CD8-positive, alpha-beta T cell (primary cell): ENCODE measurements at regions of chr19 and their contacts with region 1.

Region 1: DNA sequence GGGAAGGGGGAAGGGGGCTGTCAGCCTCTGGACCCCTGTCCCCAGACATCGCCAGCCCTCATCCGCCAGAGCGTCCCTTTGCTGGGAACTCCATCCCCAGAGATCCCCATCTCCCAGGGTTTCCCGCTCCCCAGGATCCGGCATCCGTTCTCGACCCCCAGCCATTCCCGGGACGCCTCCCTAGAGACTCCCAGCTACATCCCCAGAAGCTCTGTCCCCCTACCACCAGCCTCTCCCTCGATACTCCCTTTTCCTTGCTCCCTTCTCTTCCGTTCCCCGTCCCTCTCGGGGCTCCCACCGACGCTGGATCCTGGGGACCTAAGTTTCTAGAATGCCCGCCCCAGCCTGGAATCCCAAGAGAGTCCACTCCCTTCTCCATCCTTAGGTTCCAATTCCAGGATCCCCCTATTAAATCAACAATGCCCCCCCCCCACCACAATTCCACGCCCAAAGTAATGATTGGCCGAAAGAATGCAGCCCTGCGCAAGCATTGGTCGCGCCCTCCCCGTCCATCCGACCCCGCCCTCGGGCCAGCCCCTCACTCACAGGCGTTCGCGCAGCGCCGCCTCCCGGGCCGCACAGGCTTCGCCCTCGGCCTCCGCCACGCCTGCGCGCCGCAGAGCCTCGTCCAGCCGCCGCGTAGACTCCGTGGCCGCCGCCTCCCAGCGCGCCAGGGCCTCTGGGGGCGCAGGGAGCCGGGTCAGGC is 3.2 kb downstream of the CCDC194 start:
- DNase-seq: peak; percentile 75 to 94 (median 90)
- ATAC-seq: peak; percentile 99
- H3K4me3 ChIP-seq: peak overlapping the region; percentile 63 to 66
- H3K4me3 Mint-ChIP-seq: peak overlapping the region; percentile 87
- H3K27ac ChIP-seq: no peak overlapping the region
- H3K27ac Mint-ChIP-seq: no peak overlapping the region
- H3K4me1 ChIP-seq: peaks cover 22% of the 10 kb centered on the region
- H3K4me1 Mint-ChIP-seq: peaks cover 18% of the 10 kb centered on the region
- H3K27me3 ChIP-seq: no peaks in the 10 kb centered on the region
- H3K27me3 Mint-ChIP-seq: no peaks in the 10 kb centered on the region
- CTCF ChIP-seq: peak; percentile 62

Region 2: DNA sequence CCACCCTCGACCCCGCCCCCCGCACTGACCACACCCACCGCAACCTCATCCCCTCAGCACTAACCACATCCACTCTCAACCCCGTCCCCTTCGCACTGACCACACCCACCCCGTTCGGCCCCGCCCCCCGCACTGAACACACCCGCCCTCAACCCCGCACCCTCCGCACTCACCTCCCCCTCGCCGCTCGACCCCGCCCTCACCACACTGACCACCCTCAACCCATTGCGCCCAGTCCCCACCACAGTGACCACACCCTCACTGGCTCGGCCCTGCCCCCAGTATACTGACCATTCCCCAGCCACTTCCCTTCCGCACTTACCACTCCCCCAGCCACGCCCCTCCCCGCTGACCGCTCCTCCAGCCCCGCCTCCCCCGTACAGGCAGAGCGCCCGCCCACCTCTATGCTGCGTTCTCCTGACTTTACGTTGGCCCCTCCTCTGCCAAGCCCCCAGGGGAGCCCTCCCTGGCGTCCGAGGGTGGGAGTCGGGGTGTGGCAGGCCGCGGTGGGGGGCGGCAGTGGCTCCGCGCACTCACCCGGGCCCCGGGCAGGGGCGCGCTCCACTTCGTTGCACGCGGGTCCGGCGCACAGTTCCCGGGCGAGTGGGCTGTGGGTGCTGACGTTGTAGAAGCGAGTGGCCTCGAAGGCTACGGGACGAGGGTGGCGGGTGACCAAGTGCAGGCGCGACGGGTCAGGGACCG is 493.5 kb before region 1 on chr19:
- CTCF ChIA-PET with region 1: no interaction called
- POLR2A ChIA-PET with region 1: no interaction called
- intact Hi-C with region 1: no loop called
- DNase-seq: peak in 8 of 9 experiments; percentile 32 to 79 (median 62)
- ATAC-seq: peak; percentile 48
- H3K4me3 ChIP-seq: peak overlapping the region; percentile 48 to 59
- H3K4me3 Mint-ChIP-seq: peak overlapping the region; percentile 73
- H3K27ac ChIP-seq: no peak overlapping the region
- H3K27ac Mint-ChIP-seq: no peak overlapping the region
- H3K4me1 ChIP-seq: peaks cover 26% of the 10 kb centered on the region
- H3K4me1 Mint-ChIP-seq: peaks cover 13% of the 10 kb centered on the region
- H3K27me3 ChIP-seq: no peaks in the 10 kb centered on the region
- H3K27me3 Mint-ChIP-seq: peaks cover 40% of the 10 kb centered on the region
- CTCF ChIP-seq: no peak

Region 3: DNA sequence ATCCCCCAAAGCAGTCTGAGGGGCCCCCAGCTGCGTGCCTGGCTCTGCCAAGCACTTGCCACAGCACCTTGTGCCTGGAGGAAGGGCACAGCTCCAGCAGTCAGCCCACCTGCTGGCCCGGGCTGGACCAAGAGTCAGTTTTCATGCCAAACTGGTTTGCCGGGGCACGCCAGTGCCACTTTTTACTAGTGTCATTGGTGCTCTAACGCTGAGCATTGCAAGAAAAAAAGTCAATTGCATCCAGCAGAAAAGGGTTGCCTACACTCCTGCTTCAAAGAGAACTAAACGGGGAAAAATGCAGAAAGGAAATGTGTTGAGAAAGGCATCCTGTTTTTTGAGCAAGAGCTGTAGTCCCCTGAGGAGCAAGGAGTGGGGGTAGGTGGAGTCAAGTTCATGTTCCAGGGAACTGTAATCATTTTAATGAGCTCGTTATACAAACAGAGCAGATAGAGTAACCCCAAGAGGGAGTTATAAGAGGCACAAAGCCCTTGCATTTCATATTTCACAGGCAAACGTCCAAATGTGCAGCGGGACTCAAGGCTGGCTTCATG is 433.6 kb before region 1 on chr19:
- CTCF ChIA-PET with region 1: no interaction called
- POLR2A ChIA-PET with region 1: no interaction called
- intact Hi-C with region 1: no loop called
- DNase-seq: no peak
- ATAC-seq: no peak
- H3K4me3 ChIP-seq: no peak overlapping the region
- H3K4me3 Mint-ChIP-seq: no peak overlapping the region
- H3K27ac ChIP-seq: no peak overlapping the region
- H3K27ac Mint-ChIP-seq: no peak overlapping the region
- H3K4me1 ChIP-seq: no peaks in the 10 kb centered on the region
- H3K4me1 Mint-ChIP-seq: no peaks in the 10 kb centered on the region
- H3K27me3 ChIP-seq: peaks cover 0 to 3% of the 10 kb centered on the region in 2 experiments
- H3K27me3 Mint-ChIP-seq: peaks cover 35% of the 10 kb centered on the region
- CTCF ChIP-seq: no peak

Region 4: DNA sequence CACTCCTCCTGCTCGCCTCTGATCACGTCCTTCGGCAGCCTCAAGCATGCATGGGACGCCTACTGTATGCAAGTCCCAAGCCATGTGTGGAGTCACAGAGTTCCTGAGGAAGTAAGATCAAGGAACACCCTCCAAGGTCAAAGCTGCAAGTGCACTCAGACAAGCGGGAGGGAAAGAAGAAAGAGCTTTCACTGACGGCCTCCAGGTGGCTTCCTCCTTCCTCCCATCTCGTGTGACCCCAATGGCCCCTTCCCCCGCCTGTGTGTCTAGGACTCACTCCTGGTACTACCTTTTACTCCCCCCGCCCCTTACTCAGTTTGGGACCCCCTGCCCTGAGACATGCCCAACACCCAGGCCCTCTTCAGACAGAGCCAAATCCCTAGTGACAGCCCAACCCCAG is 321.6 kb before region 1 on chr19:
- CTCF ChIA-PET with region 1: no interaction called
- POLR2A ChIA-PET with region 1: no interaction called
- intact Hi-C with region 1: loop called in 1 of 2 experiments (anchors 5 kb)
- DNase-seq: no peak
- ATAC-seq: no peak
- H3K4me3 ChIP-seq: no peak overlapping the region
- H3K4me3 Mint-ChIP-seq: no peak overlapping the region
- H3K27ac ChIP-seq: no peak overlapping the region
- H3K27ac Mint-ChIP-seq: no peak overlapping the region
- H3K4me1 ChIP-seq: peaks cover 27% of the 10 kb centered on the region
- H3K4me1 Mint-ChIP-seq: peaks cover 48% of the 10 kb centered on the region
- H3K27me3 ChIP-seq: no peaks in the 10 kb centered on the region
- H3K27me3 Mint-ChIP-seq: no peaks in the 10 kb centered on the region
- CTCF ChIP-seq: no peak

Region 5: DNA sequence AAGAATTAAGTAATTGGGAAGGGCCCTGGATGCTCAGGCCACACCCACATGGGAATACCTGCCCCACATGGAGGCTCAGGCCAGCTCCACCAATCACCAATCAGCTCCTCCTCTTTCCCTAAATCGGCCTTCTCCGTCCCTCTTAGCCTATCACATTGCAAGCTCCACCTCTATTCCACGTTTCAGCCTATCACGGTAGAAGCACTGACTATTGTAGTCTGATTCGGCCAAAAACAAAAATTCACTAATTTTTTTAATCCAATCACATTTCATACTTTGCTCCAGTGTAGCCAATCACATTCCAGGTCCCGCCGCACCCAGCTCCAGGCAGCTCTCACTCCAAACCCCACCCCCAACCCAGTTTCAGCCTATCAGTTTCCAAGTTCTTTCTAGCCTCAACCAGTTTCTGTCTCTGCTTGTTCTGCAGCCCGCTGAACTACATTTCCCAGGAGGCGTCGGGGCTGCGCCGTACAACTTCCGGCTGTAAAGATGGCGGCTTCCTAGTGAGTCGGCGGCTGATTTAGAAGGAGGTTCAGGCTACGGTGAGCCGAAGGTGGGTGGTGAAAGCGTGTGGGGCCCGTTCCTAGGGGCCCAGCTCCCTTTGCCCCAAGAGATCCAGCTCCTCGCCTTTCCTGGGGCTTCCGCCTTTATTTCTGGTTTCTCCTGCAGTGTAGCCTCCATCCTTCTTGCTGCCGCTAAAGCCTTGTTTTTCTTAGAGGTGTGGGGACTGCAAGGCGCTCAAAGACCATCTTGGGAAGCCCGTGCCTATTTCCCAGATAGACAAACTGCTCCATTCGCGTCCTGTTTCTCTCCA is 123.6 kb before region 1 on chr19 and contains the start of gene BABAM1:
- CTCF ChIA-PET with region 1: interaction called, 4 read pairs
- POLR2A ChIA-PET with region 1: no interaction called
- intact Hi-C with region 1: loop called in 1 of 2 experiments (anchors 10 kb)
- DNase-seq: peak; percentile 81 to 98 (median 92)
- ATAC-seq: peak; percentile 93
- H3K4me3 ChIP-seq: peak within 1 kb of the TSS; percentile 72 to 82
- H3K4me3 Mint-ChIP-seq: peak within 1 kb of the TSS; percentile 79
- H3K27ac ChIP-seq: peak within 1 kb of the TSS; percentile 61 to 77
- H3K27ac Mint-ChIP-seq: peak within 1 kb of the TSS; percentile 63
- H3K4me1 ChIP-seq: peaks cover 14% of the 10 kb centered on the region
- H3K4me1 Mint-ChIP-seq: peaks cover 18% of the 10 kb centered on the region
- H3K27me3 ChIP-seq: no peaks in the 10 kb centered on the region
- H3K27me3 Mint-ChIP-seq: no peaks in the 10 kb centered on the region
- CTCF ChIP-seq: no peak
- total RNA-seq, gene BABAM1: 46.9 to 58.0 TPM

Region 6: GRCh38 chr19:17336872-17337722 is 53.7 kb before region 1 on chr19 and contains the start of gene GTPBP3:
- CTCF ChIA-PET with region 1: interaction called, 107 read pairs
- POLR2A ChIA-PET with region 1: no interaction called
- intact Hi-C with region 1: loop called in 1 of 2 experiments (anchors 1 kb)
- DNase-seq: peak; percentile 90 to 99 (median 95)
- ATAC-seq: peak; percentile 90
- H3K4me3 ChIP-seq: peak within 1 kb of the TSS; percentile 90 to 98
- H3K4me3 Mint-ChIP-seq: peak within 1 kb of the TSS; percentile 88
- H3K27ac ChIP-seq: peak within 1 kb of the TSS; percentile 75 to 91
- H3K27ac Mint-ChIP-seq: peak within 1 kb of the TSS; percentile 91
- H3K4me1 ChIP-seq: peaks cover 34% of the 10 kb centered on the region
- H3K4me1 Mint-ChIP-seq: peaks cover 34% of the 10 kb centered on the region
- H3K27me3 ChIP-seq: no peaks in the 10 kb centered on the region
- H3K27me3 Mint-ChIP-seq: no peaks in the 10 kb centered on the region
- CTCF ChIP-seq: no peak
- total RNA-seq, gene GTPBP3: 20.8 to 25.7 TPM

Region 7: GRCh38 chr19:17419621-17420466 is 29.0 kb after region 1 on chr19 and contains the start of gene MVB12A:
- CTCF ChIA-PET with region 1: interaction called, 14 read pairs
- POLR2A ChIA-PET with region 1: interaction called, 3 read pairs
- intact Hi-C with region 1: loop called in 1 of 2 experiments (anchors 1 kb)
- DNase-seq: peak; percentile 90 to 100 (median 96)
- ATAC-seq: peak; percentile 98
- H3K4me3 ChIP-seq: peak within 1 kb of the TSS; percentile 69 to 76
- H3K4me3 Mint-ChIP-seq: peak within 1 kb of the TSS; percentile 89
- H3K27ac ChIP-seq: peak within 1 kb of the TSS; percentile 47 to 51
- H3K27ac Mint-ChIP-seq: peak within 1 kb of the TSS; percentile 80
- H3K4me1 ChIP-seq: peaks cover 19% of the 10 kb centered on the region
- H3K4me1 Mint-ChIP-seq: peaks cover 18% of the 10 kb centered on the region
- H3K27me3 ChIP-seq: no peaks in the 10 kb centered on the region
- H3K27me3 Mint-ChIP-seq: no peaks in the 10 kb centered on the region
- CTCF ChIP-seq: no peak
- total RNA-seq, gene MVB12A: 9.1 to 10.4 TPM

Region 8: DNA sequence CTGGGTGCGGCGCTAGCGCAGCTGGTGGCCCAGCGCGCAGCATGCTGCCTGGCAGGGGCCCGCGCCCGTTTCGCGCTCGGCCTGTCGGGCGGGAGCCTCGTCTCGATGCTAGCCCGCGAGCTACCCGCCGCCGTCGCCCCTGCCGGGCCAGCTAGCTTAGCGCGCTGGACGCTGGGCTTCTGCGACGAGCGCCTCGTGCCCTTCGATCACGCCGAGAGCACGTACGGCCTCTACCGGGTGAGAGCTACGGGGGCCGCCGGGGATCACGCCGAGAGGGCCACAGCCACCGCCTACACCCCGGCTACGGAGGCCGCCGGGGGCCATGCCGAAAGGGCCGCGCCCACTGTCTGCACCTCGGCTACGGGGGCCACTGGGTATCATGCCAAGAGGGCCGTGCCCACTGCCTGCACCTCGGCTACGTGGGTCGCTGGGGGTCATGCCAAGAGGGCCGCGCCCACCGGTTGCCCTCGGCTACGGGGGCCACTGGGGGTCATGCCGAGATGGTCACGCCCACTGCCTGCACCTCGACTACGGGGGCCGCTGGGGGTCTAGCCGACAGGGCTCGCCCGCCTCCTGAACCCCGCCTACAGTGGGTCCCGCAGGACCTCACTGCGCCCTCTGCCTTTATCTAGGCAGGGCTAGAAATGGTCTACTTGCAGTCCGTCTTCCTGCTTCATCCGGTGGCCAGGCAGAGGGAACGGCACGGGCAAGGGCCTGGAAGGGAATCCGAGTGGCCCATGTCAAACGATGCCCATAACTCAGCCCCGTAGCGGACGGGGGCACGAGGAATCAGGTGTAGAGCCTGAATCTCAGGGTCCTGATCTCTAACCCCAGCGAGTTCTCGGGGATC is 121.1 kb after region 1 on chr19:
- CTCF ChIA-PET with region 1: interaction called, 3 read pairs
- POLR2A ChIA-PET with region 1: no interaction called
- intact Hi-C with region 1: loop called in 1 of 2 experiments (anchors 1 kb)
- DNase-seq: peak; percentile 77 to 96 (median 89)
- ATAC-seq: peak; percentile 83
- H3K4me3 ChIP-seq: peak overlapping the region; percentile 68 to 96
- H3K4me3 Mint-ChIP-seq: peak overlapping the region; percentile 100
- H3K27ac ChIP-seq: peak overlapping the region; percentile 81 to 86
- H3K27ac Mint-ChIP-seq: peak overlapping the region; percentile 97
- H3K4me1 ChIP-seq: peaks cover 17% of the 10 kb centered on the region
- H3K4me1 Mint-ChIP-seq: peaks cover 36% of the 10 kb centered on the region
- H3K27me3 ChIP-seq: no peaks in the 10 kb centered on the region
- H3K27me3 Mint-ChIP-seq: no peaks in the 10 kb centered on the region
- CTCF ChIP-seq: no peak

Region 9: GRCh38 chr19:17565611-17566010 is 174.8 kb after region 1 on chr19:
- CTCF ChIA-PET with region 1: no interaction called
- POLR2A ChIA-PET with region 1: no interaction called
- intact Hi-C with region 1: no loop called
- DNase-seq: no peak
- ATAC-seq: no peak
- H3K4me3 ChIP-seq: no peak overlapping the region
- H3K4me3 Mint-ChIP-seq: no peak overlapping the region
- H3K27ac ChIP-seq: no peak overlapping the region
- H3K27ac Mint-ChIP-seq: no peak overlapping the region
- H3K4me1 ChIP-seq: no peaks in the 10 kb centered on the region
- H3K4me1 Mint-ChIP-seq: peaks cover 3% of the 10 kb centered on the region
- H3K27me3 ChIP-seq: no peaks in the 10 kb centered on the region
- H3K27me3 Mint-ChIP-seq: no peaks in the 10 kb centered on the region
- CTCF ChIP-seq: no peak

Region 10: DNA sequence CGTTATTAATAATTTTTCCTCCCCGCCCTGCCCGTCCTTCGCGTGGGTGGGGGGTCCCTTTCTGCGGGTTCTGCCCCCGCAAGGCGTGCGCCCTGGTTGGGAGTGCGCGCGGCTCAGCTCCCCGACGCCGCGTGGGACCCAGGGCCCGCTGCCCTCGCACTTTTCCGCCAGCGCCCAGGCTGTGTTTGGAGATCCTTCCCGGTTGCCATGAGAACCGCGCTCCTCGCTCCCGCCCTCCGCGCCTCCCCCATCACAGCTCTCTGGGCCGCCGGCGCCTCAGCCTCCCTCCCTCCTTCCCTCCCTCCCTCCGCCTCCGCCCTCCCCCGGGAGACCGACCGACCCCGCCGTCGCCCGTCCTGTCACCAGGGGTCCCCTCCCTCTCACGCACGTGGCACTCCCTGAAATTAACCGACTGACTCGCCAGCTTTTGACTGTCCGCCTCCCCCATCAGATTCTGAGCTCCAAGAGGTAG is 1026.0 kb after region 1 on chr19:
- CTCF ChIA-PET with region 1: no interaction called
- POLR2A ChIA-PET with region 1: no interaction called
- intact Hi-C with region 1: no loop called
- DNase-seq: peak in 8 of 9 experiments; percentile 37 to 90 (median 62)
- ATAC-seq: peak; percentile 19
- H3K4me3 ChIP-seq: peak overlapping the region; percentile 33 to 45
- H3K4me3 Mint-ChIP-seq: peak overlapping the region; percentile 76
- H3K27ac ChIP-seq: peak overlapping the region in 1 of 2 experiments; percentile 85
- H3K27ac Mint-ChIP-seq: no peak overlapping the region
- H3K4me1 ChIP-seq: peaks cover 67% of the 10 kb centered on the region
- H3K4me1 Mint-ChIP-seq: peaks cover 59% of the 10 kb centered on the region
- H3K27me3 ChIP-seq: peaks cover 0 to 7% of the 10 kb centered on the region in 2 experiments
- H3K27me3 Mint-ChIP-seq: peaks cover 14% of the 10 kb centered on the region
- CTCF ChIP-seq: no peak